OCI-LY7 (cell line): ENCODE measurements at regions of chr3 and their contacts with region 1.

Region 1: DNA sequence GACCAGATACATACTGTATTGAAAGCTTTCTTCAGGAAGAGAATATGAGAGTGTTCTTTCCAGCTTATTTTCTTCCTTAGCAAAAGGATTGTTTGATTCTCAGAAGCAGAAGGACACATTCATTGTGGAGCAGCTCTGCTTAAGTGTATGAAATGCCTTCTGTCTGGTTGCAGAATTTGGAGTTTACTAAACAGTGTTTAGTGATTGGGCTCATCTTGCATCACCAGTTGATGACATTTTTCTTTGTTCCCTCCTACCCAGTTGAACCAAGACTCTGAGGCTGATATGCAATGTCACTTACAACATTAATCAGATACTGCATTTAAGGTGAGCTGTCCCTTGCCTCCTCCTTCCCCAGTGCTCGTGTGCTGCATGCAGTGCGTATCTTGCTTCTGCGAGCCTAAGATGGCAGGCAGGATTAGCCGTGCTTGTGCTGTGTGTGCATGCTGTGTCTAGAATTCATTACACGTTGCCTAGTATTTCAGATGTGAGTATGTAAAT is 18.4 kb downstream of the ZBTB38 start:
- DNase-seq: peak; percentile 82
- H3K4me3 ChIP-seq: peak overlapping the region; percentile 71
- H3K27ac ChIP-seq: peak overlapping the region; percentile 84
- H3K4me1 ChIP-seq: peaks cover 38% of the 10 kb centered on the region
- CTCF ChIP-seq: no peak

Region 2: DNA sequence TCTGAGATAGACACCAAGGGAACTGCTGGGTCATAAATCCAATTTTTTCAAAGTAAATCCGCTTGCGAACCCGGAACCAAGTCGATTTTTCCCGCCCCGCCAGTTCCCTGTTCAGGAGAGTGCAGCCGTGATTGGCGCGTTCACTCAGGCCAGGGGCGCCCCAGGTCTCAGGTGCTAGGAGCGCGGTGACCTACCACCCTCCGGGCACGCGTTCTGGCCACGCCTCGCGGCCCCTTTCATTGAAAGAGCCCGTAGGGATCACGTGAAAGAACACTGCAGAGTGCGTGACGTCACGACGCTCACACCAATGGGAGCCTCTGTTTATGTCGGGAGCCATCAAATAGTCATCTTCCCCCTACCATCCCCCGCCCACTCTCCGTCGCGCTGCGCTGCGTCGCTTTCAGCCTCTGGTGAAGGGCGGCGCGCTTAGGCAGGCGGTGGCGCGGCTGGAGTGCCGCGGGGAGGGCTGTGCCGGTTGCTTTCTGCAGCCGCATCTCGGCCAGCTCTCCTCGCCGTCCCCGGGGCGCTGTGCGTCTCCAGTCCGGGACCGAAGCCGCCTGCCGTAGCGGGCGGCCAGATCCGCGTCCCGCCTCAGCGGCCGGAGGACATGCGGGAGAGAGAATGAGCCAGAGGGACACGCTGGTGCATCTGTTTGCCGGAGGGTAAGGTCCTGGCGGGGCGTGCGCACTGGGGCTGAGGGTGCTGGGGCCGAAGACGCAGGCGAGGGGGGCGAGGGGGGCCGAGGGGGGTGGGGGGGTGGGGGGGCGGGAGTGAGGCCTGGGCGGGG is 445.0 kb before region 1 on chr3 and contains the start of gene SLC25A36:
- CTCF ChIA-PET with region 1: no interaction called
- POLR2A ChIA-PET with region 1: no interaction called
- intact Hi-C with region 1: loop called (anchors 10 kb)
- DNase-seq: peak; percentile 99
- H3K4me3 ChIP-seq: peak within 1 kb of the TSS; percentile 82
- H3K27ac ChIP-seq: peak within 1 kb of the TSS; percentile 64
- H3K4me1 ChIP-seq: peaks cover 30% of the 10 kb centered on the region
- CTCF ChIP-seq: no peak
- total RNA-seq, gene SLC25A36: 71.8 and 91.3 TPM in 2 replicates

Region 3: DNA sequence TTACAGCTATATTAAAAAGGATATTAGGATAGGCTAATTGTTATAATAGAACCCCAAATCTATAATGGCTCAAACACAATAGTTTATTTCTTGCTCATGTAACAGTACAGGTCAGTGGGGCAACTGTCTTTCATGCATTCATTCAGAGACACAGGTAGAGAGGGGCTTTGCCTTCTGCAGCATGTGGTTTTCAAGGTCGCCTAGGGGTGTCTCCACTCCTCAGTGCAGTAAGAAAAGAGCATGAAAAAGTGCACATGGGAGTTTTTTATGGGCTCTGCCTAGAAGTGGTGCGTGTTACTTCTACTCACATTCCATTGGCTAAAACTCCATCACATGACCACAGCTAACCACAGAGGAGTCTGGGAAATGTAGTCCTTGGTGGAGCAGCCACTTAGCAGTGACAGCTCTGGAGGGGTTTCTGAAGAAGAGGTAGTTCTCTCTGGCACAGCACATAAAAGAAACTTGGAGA is 16.6 kb before region 1 on chr3:
- CTCF ChIA-PET with region 1: interaction called, 9 read pairs
- POLR2A ChIA-PET with region 1: interaction called, 25 read pairs
- intact Hi-C with region 1: loop called (anchors 1 kb)
- DNase-seq: peak; percentile 96
- H3K4me3 ChIP-seq: no peak overlapping the region
- H3K27ac ChIP-seq: no peak overlapping the region
- H3K4me1 ChIP-seq: peaks cover 5% of the 10 kb centered on the region
- CTCF ChIP-seq: peak; percentile 87

Region 4: GRCh38 chr3:141402476-141403171 is 16.0 kb after region 1 on chr3:
- CTCF ChIA-PET with region 1: no interaction called
- POLR2A ChIA-PET with region 1: interaction called, 15 read pairs
- intact Hi-C with region 1: no loop called
- DNase-seq: no peak
- H3K4me3 ChIP-seq: peak overlapping the region; percentile 58
- H3K27ac ChIP-seq: no peak overlapping the region
- H3K4me1 ChIP-seq: no peaks in the 10 kb centered on the region
- CTCF ChIP-seq: no peak

Region 5: GRCh38 chr3:141875374-141875892 is 488.8 kb after region 1 on chr3:
- CTCF ChIA-PET with region 1: no interaction called
- POLR2A ChIA-PET with region 1: interaction called, 3 read pairs
- intact Hi-C with region 1: loop called (anchors 5 kb)
- DNase-seq: peak; percentile 90
- H3K4me3 ChIP-seq: peak overlapping the region; percentile 98
- H3K27ac ChIP-seq: peak overlapping the region; percentile 86
- H3K4me1 ChIP-seq: peaks cover 23% of the 10 kb centered on the region
- CTCF ChIP-seq: peak; percentile 92